B cell (primary cell): ENCODE measurements at regions of chr6 and their contacts with region 1.

Region 1: GRCh38 chr6:28252009-28252975 is at the start of gene ZKSCAN4:
- DNase-seq: peak; percentile 89
- ATAC-seq: peak; percentile 90
- H3K4me3 ChIP-seq: peak within 1 kb of the TSS; percentile 59 to 99 (median 94)
- H3K4me3 Mint-ChIP-seq: peak within 1 kb of the TSS; percentile 98
- H3K27ac ChIP-seq: peak within 1 kb of the TSS; percentile 22 to 58
- H3K27ac Mint-ChIP-seq: peak within 1 kb of the TSS; percentile 78
- H3K4me1 ChIP-seq: peaks cover 14 to 20% of the 10 kb centered on the region in 2 donors
- H3K4me1 Mint-ChIP-seq: peaks cover 31% of the 10 kb centered on the region
- H3K27me3 ChIP-seq: peaks cover 0 to 3% (median 2%) of the 10 kb centered on the region in 4 experiments
- H3K27me3 Mint-ChIP-seq: no peaks in the 10 kb centered on the region
- CTCF ChIP-seq: no peak
- total RNA-seq, gene ZKSCAN4: 10.9 and 12.1 TPM in 2 replicates

Region 2: DNA sequence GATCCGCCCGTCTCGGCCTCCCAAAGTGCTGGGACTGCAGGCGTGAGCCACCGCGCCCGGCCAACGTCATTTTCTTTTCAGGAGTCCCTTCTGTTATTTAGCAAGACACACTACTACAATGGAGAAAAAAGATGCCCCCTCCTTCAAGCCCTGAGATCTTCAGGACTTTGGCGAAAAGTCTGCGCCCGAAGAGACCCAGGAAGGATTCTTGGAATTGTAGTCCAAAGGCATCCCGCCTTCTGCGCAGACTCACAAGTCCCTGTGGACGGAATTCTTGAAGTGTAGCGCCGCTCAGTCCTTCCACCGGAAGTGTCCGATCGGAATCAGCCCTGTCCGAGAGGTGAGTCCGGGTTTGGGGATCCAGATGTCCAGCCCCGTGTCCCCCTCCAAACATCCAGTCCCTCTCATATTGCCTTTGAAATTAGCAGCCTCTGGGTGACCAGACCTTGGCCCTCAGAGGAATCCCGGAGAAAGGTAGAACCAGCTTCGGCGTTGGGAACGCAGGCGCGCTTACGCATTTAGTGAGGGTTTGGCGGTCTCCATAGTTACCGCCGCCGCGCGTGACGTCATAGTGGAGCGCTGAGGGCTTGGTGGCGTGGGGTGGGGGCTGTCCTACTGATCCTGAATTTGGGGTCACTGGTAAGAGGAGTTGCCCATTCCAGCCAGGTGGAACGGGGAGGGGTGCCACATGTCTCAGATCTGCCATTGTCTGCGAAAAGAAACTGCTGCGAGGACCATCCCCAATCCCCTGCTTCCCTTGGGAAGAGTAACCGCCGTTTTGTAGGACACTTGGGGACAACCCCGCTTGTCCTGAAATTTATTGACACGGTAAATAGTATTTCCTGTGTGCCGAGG is 171.4 kb before region 1 on chr6:
- CTCF ChIA-PET with region 1: no interaction called
- POLR2A ChIA-PET with region 1: interaction called, 10 read pairs
- intact Hi-C with region 1: no loop called
- DNase-seq: peak; percentile 98
- ATAC-seq: peak; percentile 67
- H3K4me3 ChIP-seq: peak overlapping the region; percentile 67 to 96 (median 88)
- H3K4me3 Mint-ChIP-seq: peak overlapping the region; percentile 92
- H3K27ac ChIP-seq: peak overlapping the region; percentile 94 to 100
- H3K27ac Mint-ChIP-seq: peak overlapping the region; percentile 98
- H3K4me1 ChIP-seq: peaks cover 10 to 22% of the 10 kb centered on the region in 2 donors
- H3K4me1 Mint-ChIP-seq: peaks cover 36% of the 10 kb centered on the region
- H3K27me3 ChIP-seq: no peaks in the 10 kb centered on the region
- H3K27me3 Mint-ChIP-seq: no peaks in the 10 kb centered on the region
- CTCF ChIP-seq: no peak

Region 3: GRCh38 chr6:28225056-28225834 is 27.0 kb before region 1 on chr6 and contains the start of gene ZSCAN9:
- CTCF ChIA-PET with region 1: interaction called, 6 read pairs
- POLR2A ChIA-PET with region 1: no interaction called
- intact Hi-C with region 1: loop called (anchors 1 kb)
- DNase-seq: peak; percentile 80
- ATAC-seq: peak; percentile 95
- H3K4me3 ChIP-seq: peak within 1 kb of the TSS; percentile 77 to 90 (median 89)
- H3K4me3 Mint-ChIP-seq: peak within 1 kb of the TSS; percentile 98
- H3K27ac ChIP-seq: peak within 1 kb of the TSS; percentile 25 to 75
- H3K27ac Mint-ChIP-seq: peak within 1 kb of the TSS; percentile 89
- H3K4me1 ChIP-seq: peaks cover 10 to 15% of the 10 kb centered on the region in 2 donors
- H3K4me1 Mint-ChIP-seq: peaks cover 22% of the 10 kb centered on the region
- H3K27me3 ChIP-seq: peaks cover 0 to 18% (median 7%) of the 10 kb centered on the region in 4 experiments
- H3K27me3 Mint-ChIP-seq: peaks cover 18% of the 10 kb centered on the region
- CTCF ChIP-seq: no peak
- total RNA-seq, gene ZSCAN9: 29.8 and 32.0 TPM in 2 replicates

Region 4: DNA sequence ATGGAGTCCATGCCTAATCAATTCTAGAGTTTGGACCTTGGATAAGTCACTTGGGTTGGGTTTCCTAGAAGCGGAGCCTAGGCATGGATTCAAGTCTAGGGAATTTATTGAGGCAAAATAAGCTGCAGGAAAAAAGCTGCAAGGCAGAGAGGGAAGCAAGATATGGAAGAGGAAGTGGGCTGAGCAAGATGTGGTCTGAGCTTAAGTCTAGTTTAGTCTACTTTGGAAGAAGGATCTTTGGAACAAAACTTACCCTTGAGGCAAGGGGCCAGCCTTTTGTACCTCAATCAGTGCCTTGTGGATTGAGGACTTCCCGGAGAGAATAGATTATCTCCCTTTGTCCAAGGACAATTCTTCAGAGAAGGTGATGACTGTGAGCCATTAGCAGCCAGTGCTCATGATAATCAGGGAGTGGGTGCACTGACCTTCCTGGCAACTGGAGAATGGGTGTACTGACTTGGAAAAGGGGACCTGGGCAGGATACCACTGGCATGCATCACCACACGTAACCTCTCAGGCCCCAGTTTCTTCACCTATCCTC is 16.3 kb before region 1 on chr6:
- CTCF ChIA-PET with region 1: no interaction called
- POLR2A ChIA-PET with region 1: no interaction called
- intact Hi-C with region 1: no loop called
- DNase-seq: no peak
- ATAC-seq: no peak
- H3K4me3 ChIP-seq: no peak overlapping the region
- H3K4me3 Mint-ChIP-seq: no peak overlapping the region
- H3K27ac ChIP-seq: no peak overlapping the region
- H3K27ac Mint-ChIP-seq: no peak overlapping the region
- H3K4me1 ChIP-seq: no peaks in the 10 kb centered on the region
- H3K4me1 Mint-ChIP-seq: no peaks in the 10 kb centered on the region
- H3K27me3 ChIP-seq: no peaks in the 10 kb centered on the region
- H3K27me3 Mint-ChIP-seq: no peaks in the 10 kb centered on the region
- CTCF ChIP-seq: no peak

Region 5: GRCh38 chr6:28274888-28275287 is 22.6 kb after region 1 on chr6:
- CTCF ChIA-PET with region 1: no interaction called
- POLR2A ChIA-PET with region 1: no interaction called
- intact Hi-C with region 1: no loop called
- DNase-seq: no peak
- ATAC-seq: no peak
- H3K4me3 ChIP-seq: no peak overlapping the region
- H3K4me3 Mint-ChIP-seq: no peak overlapping the region
- H3K27ac ChIP-seq: no peak overlapping the region
- H3K27ac Mint-ChIP-seq: no peak overlapping the region
- H3K4me1 ChIP-seq: no peaks in the 10 kb centered on the region
- H3K4me1 Mint-ChIP-seq: peaks cover 4% of the 10 kb centered on the region
- H3K27me3 ChIP-seq: no peaks in the 10 kb centered on the region
- H3K27me3 Mint-ChIP-seq: no peaks in the 10 kb centered on the region
- CTCF ChIP-seq: no peak

Region 6: DNA sequence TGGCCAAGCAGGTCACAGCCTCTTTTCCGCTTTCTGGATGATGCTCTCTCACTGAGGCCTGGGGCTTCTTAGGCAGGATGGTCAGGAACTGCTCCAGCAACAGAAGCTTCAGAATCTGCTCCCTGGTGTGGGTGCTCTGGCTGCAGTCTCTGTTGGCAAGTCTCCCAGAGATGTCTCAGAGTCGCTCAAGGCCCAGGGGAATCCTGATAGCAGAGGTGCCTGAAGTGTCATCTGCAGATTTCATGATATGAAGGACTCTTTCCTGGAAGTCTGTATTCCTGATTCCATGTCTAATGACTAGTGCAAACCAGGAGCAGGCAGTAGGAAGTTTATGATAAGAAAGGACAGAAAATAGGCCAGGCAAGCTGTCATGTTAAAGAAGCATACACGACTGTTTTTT is 63.3 kb after region 1 on chr6:
- CTCF ChIA-PET with region 1: no interaction called
- POLR2A ChIA-PET with region 1: no interaction called
- intact Hi-C with region 1: no loop called
- DNase-seq: no peak
- ATAC-seq: no peak
- H3K4me3 ChIP-seq: no peak overlapping the region
- H3K4me3 Mint-ChIP-seq: no peak overlapping the region
- H3K27ac ChIP-seq: no peak overlapping the region
- H3K27ac Mint-ChIP-seq: no peak overlapping the region
- H3K4me1 ChIP-seq: no peaks in the 10 kb centered on the region
- H3K4me1 Mint-ChIP-seq: no peaks in the 10 kb centered on the region
- H3K27me3 ChIP-seq: peaks cover 0 to 12% (median 0%) of the 10 kb centered on the region in 4 experiments
- H3K27me3 Mint-ChIP-seq: peaks cover 5% of the 10 kb centered on the region
- CTCF ChIP-seq: no peak

Region 7: DNA sequence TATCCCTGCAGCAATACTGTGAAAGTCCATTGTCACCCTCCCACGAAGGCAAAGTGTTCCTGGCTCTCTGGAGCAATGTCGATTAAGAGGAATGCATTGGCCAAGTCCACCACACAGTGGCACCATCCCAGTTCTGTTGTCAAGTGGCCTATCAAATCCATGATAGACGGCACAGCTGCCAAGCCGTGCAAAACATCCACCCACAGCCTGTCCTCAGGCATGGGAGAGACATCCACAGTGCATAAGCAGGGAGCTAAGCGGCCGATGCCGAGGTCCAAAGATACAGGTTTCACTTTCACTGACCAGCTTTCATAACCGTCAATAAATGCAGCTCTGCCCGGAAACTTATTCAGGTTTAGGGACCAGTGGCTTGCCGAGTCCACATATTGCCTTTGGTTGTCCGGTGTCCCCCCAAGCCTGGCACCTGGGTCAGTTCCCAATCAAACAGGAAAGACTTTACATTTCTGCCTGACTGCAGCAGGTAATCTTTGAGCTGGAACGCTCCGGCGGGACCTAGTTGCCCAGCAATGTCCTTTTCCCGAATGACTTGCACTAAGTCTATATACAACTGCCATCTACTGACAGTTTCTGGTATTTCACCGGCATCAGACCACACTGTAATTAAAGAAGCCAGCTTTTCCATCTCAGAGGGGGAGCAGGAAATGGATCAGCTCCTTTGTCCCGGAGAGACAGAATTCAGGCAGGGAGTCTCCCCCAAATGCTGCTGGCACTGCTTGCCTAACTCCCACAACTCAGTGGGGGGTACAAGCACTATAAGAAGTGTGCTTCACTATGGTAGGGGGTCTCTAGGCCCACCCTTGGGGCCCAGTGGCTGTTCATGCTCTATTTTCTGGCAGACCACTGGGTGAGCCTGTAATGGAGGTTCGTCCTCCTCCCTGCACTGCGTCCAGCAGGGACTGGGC is 103.7 kb after region 1 on chr6:
- CTCF ChIA-PET with region 1: interaction called, 12 read pairs
- POLR2A ChIA-PET with region 1: no interaction called
- intact Hi-C with region 1: loop called (anchors 1 kb)
- DNase-seq: peak; percentile 81
- ATAC-seq: peak; percentile 87
- H3K4me3 ChIP-seq: peak overlapping the region; percentile 48 to 70 (median 61)
- H3K4me3 Mint-ChIP-seq: peak overlapping the region; percentile 99
- H3K27ac ChIP-seq: no peak overlapping the region
- H3K27ac Mint-ChIP-seq: peak overlapping the region; percentile 87
- H3K4me1 ChIP-seq: peaks cover 2 to 17% of the 10 kb centered on the region in 2 donors
- H3K4me1 Mint-ChIP-seq: peaks cover 18% of the 10 kb centered on the region
- H3K27me3 ChIP-seq: no peaks in the 10 kb centered on the region
- H3K27me3 Mint-ChIP-seq: no peaks in the 10 kb centered on the region
- CTCF ChIP-seq: peak; percentile 84